ENCODE measurements at regions of chr2 and their contacts with region 1.

Region 1: DNA sequence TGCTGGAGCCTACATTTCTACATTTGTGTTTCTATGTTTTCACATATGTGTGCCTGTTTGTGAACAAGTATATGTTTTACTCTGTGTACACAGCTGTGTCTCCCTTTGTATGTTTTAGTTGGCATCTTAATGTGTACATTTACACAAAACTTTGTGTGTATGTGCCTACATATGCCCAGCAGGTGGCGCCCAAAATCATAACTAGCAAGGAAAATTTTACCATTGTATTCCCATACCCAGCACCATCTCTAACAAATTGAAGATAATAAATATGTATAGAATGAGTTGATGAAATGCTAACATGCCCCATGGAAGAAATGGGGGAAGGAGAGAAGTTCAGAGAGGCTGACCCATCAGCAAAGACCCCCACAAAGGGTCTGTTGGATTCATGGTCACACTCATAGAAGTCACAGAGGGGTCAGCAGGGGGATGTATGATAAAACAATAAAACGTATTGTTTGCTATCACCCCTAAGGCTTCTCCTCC is 48.1 kb downstream of the PKDCC start:
- DNase-seq: peak; percentile 74 to 78
- H3K4me3 ChIP-seq: no peak overlapping the region
- H3K27ac ChIP-seq: no peak overlapping the region
- H3K4me1 ChIP-seq: peaks cover 0 to 32% (median 13%) of the 10 kb centered on the region in 4 donors
- H3K27me3 ChIP-seq: no peaks in the 10 kb centered on the region
- CTCF ChIP-seq: peak; percentile 76 to 96

Region 2: GRCh38 chr2:42196403-42197267 is 100.7 kb after region 1 on chr2:
- intact Hi-C with region 1: loop called (anchors 5 kb)
- DNase-seq: peak in 1 of 2 donors; percentile 28
- H3K4me3 ChIP-seq: no peak overlapping the region
- H3K27ac ChIP-seq: no peak overlapping the region
- H3K4me1 ChIP-seq: peaks cover 0 to 44% (median 15%) of the 10 kb centered on the region in 4 donors
- H3K27me3 ChIP-seq: no peaks in the 10 kb centered on the region
- CTCF ChIP-seq: peak; percentile 50 to 54

Region 3: GRCh38 chr2:42233976-42234441 is 138.0 kb after region 1 on chr2:
- intact Hi-C with region 1: loop called (anchors 2 kb)
- DNase-seq: no peak
- H3K4me3 ChIP-seq: no peak overlapping the region
- H3K27ac ChIP-seq: no peak overlapping the region
- H3K4me1 ChIP-seq: no peaks in the 10 kb centered on the region
- H3K27me3 ChIP-seq: no peaks in the 10 kb centered on the region
- CTCF ChIP-seq: no peak

Region 4: GRCh38 chr2:42328148-42328833 is 232.3 kb after region 1 on chr2:
- intact Hi-C with region 1: loop called (anchors 5 kb)
- DNase-seq: no peak
- H3K4me3 ChIP-seq: no peak overlapping the region
- H3K27ac ChIP-seq: no peak overlapping the region
- H3K4me1 ChIP-seq: peaks cover 0 to 7% (median 0%) of the 10 kb centered on the region in 4 donors
- H3K27me3 ChIP-seq: no peaks in the 10 kb centered on the region
- CTCF ChIP-seq: peak; percentile 29 to 48

Region 5: DNA sequence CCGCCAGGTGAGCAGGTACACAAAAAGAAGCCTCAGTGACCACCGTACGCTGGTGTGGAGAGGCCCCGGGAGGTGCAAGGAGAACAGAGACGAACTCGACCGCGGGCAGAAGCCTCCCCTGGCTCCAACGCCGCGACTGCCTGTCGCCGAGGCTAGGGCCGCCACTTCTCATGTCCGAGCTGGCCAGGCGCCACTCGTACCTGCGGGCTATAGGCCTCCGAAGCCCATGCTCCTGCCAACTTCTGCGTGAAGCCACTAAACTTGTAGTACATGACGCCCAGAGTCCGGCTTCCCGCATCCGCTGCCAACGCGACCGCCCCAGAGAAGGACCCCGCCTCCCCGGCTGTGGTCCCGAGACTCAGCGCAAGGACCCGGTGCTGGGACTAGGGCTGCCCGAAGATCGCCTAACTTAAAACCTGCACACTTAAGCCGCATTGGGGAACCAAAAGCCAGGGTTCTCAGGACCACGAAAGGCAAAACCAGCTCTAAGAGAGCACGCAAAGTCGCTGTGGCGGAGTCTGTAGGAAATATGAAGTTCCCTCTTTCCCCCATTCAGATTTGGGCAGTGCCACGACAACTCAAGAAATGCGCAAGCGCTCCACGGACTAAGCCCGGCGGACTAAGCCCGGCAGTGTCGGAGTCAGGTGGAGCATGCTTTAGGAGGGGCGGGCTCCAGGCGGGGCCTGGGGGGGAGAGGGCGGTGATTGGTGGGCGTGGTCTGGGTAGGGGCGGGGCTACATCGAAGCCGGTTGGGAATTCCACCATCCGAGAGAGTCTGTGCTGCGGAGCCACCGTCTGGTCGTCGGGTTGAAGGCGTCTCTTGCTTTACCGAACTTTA is 265.1 kb after region 1 on chr2 and contains the start of gene COX7A2L:
- intact Hi-C with region 1: loop called (anchors 10 kb)
- DNase-seq: peak; percentile 96 to 98
- H3K4me3 ChIP-seq: peak within 1 kb of the TSS; percentile 94 to 98
- H3K27ac ChIP-seq: peak within 1 kb of the TSS; percentile 92 to 95
- H3K4me1 ChIP-seq: peaks cover 0 to 39% (median 25%) of the 10 kb centered on the region in 4 donors
- H3K27me3 ChIP-seq: no peaks in the 10 kb centered on the region
- CTCF ChIP-seq: peak in 1 of 2 experiments; percentile 50